Activated T-helper 2 cell treated with anti-CD3 and anti-CD28 coated beads, Interferon-gamma antibody, Interleukin-2, Interleukin-4, amounts not matched to agents 10 μg/mL and 5 μg/mL and 100 μg/mL, durations not matched to agents 14 hours and 24 hours and 36 hours (primary cell): ENCODE measurements at regions of chr21 and their contacts with region 1.

Region 1: DNA sequence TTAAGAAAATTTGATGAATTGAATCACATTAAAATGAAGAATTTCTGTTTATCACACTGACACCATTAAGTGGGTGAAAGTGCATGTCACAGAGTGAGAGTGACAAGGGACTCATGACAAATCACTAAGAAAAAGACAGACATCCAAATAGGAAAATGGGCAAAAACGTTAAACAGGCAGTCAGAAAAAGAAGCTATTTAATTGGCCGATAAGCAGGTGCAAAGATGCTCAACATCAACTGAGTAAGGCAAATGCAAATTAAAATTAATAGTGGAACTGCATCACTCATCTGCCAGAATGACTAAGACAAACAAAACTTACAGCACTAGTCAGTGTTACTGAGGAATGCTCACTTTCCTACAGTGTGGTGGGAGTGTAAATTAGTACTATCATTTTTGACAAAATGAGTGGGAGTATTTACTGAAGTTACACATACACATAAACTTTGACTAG is 39.2 kb upstream of the RUNX1 start:
- DNase-seq: no peak
- H3K4me3 Mint-ChIP-seq: no peak overlapping the region
- H3K27ac Mint-ChIP-seq: peak overlapping the region; percentile 85
- H3K4me1 Mint-ChIP-seq: peaks cover 52% of the 10 kb centered on the region
- H3K27me3 Mint-ChIP-seq: no peaks in the 10 kb centered on the region

Region 2: GRCh38 chr21:34967509-34968289 is 120.6 kb before region 1 on chr21:
- intact Hi-C with region 1: loop called (anchors 2 kb)
- DNase-seq: peak; percentile 41
- H3K4me3 Mint-ChIP-seq: peak overlapping the region; percentile 69
- H3K27ac Mint-ChIP-seq: peak overlapping the region; percentile 99
- H3K4me1 Mint-ChIP-seq: peaks cover 82% of the 10 kb centered on the region
- H3K27me3 Mint-ChIP-seq: no peaks in the 10 kb centered on the region

Region 3: DNA sequence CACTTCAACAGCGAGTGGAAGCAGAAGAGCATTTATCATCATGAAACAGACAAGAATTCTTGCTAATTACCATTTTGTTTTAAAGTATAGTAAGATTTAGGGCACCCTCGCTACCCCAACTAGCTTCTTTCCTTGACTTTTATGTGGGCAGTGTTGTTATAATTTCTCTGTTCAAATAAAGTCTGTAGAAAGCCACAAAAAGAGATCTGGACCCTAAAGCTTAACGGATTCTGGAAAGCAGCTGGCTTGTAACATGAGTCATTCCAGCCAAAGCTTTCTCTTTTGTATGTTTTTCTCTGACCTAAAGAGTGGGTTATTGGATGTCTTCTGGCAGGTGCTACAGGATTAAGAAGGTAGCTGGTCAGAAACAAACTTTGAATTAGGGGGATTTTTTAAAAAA is 76.7 kb before region 1 on chr21:
- intact Hi-C with region 1: no loop called
- DNase-seq: no peak
- H3K4me3 Mint-ChIP-seq: peak overlapping the region; percentile 26
- H3K27ac Mint-ChIP-seq: peak overlapping the region; percentile 58
- H3K4me1 Mint-ChIP-seq: peaks cover 81% of the 10 kb centered on the region
- H3K27me3 Mint-ChIP-seq: no peaks in the 10 kb centered on the region

Region 4: GRCh38 chr21:35026617-35027562 is 61.5 kb before region 1 on chr21:
- intact Hi-C with region 1: loop called (anchors 2 kb)
- DNase-seq: peak; percentile 87
- H3K4me3 Mint-ChIP-seq: peak overlapping the region; percentile 90
- H3K27ac Mint-ChIP-seq: peak overlapping the region; percentile 100
- H3K4me1 Mint-ChIP-seq: peaks cover 86% of the 10 kb centered on the region
- H3K27me3 Mint-ChIP-seq: no peaks in the 10 kb centered on the region

Region 5: GRCh38 chr21:35037384-35037765 is 51.0 kb before region 1 on chr21:
- intact Hi-C with region 1: no loop called
- DNase-seq: no peak
- H3K4me3 Mint-ChIP-seq: peak overlapping the region; percentile 65
- H3K27ac Mint-ChIP-seq: peak overlapping the region; percentile 95
- H3K4me1 Mint-ChIP-seq: peaks cover 93% of the 10 kb centered on the region
- H3K27me3 Mint-ChIP-seq: no peaks in the 10 kb centered on the region

Region 6: DNA sequence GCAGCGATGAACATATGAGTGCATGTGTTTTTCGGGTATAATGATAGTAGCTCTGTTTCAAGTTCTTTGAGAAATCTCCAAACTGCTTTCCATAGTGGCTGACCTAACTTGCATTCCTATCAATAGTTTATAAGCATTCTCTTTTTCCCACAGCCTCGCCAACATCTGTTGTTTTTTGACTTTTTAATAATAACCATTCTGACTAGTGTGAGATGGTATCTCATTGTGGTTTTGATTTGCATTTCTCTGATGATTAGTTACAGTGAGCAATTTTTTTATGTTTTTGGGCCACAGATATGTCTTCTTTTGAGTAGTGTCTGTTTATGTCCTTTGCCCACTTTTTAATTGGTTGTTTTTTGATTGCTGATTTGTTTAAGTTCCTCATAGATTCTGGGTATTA is 28.6 kb before region 1 on chr21:
- intact Hi-C with region 1: loop called (anchors 1 kb)
- DNase-seq: no peak
- H3K4me3 Mint-ChIP-seq: peak overlapping the region; percentile 62
- H3K27ac Mint-ChIP-seq: peak overlapping the region; percentile 59
- H3K4me1 Mint-ChIP-seq: peaks cover 60% of the 10 kb centered on the region
- H3K27me3 Mint-ChIP-seq: no peaks in the 10 kb centered on the region

Region 7: DNA sequence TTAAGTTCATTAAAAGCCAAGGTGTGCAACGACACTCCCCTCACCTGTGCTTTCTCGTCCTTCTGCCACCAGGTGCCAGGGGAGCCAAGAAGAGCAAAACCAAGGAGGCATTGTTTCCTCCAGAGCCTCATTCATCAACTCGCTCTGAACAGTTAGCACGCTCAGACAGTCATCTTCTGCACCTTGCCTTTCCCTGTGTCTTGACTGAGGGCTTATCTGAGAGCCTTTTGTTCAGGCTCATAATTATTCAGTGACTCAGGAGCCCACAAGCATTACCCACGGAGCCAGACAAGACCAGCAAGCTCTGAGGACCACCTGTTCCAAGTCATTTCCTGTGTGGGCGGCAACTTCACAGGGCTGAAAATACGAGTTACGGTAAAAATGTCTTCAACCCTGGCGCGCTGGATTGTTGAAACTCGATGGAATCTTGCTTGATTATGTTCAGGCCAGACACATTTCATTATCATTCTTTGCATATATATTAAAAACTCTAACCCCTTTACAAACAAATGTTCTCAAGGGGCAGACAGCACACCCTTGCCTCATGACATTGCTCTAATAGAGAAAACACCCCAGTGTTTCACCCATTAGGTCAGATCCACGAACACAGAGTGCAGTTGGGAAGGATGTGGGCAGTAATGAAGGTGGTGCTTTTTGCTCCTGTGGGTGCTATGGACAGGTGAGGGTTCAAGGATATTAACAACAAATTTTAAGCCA is 50.5 kb after region 1 on chr21:
- intact Hi-C with region 1: loop called (anchors 1 kb)
- DNase-seq: peak; percentile 10
- H3K4me3 Mint-ChIP-seq: peak overlapping the region; percentile 62
- H3K27ac Mint-ChIP-seq: peak overlapping the region; percentile 94
- H3K4me1 Mint-ChIP-seq: peaks cover 33% of the 10 kb centered on the region
- H3K27me3 Mint-ChIP-seq: no peaks in the 10 kb centered on the region

Region 8: GRCh38 chr21:35150562-35151226 is 62.3 kb after region 1 on chr21:
- intact Hi-C with region 1: loop called (anchors 2 kb)
- DNase-seq: no peak
- H3K4me3 Mint-ChIP-seq: no peak overlapping the region
- H3K27ac Mint-ChIP-seq: peak overlapping the region; percentile 88
- H3K4me1 Mint-ChIP-seq: peaks cover 52% of the 10 kb centered on the region
- H3K27me3 Mint-ChIP-seq: no peaks in the 10 kb centered on the region

Region 9: GRCh38 chr21:35226948-35227744 is 138.8 kb after region 1 on chr21:
- intact Hi-C with region 1: loop called (anchors 2 kb)
- DNase-seq: peak; percentile 52
- H3K4me3 Mint-ChIP-seq: peak overlapping the region; percentile 37
- H3K27ac Mint-ChIP-seq: peak overlapping the region; percentile 72
- H3K4me1 Mint-ChIP-seq: peaks cover 52% of the 10 kb centered on the region
- H3K27me3 Mint-ChIP-seq: no peaks in the 10 kb centered on the region